A673 (cell line): ENCODE measurements at regions of chr1 and their contacts with region 1.

Region 1: DNA sequence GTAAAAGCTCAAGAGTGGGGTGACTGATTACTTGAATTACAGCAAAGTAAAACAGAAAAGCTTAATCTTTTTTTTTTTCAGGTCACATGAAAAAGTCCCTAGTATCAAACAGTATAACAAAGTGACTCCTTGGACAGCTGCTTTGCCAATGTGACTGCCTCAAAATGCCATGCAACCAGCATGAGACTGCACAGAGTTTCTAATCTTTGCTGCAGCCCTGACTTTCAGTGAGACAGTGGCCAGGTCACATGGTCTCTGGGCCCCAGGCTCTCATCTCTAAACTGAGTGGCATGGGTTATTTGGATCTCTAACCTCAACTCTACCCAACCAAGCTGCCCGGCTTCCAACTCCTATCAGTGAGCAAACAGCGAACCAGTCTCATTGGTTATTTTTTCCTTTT is 169.0 kb downstream of the VAV3 start:
- DNase-seq: no peak
- H3K4me3 ChIP-seq: no peak overlapping the region
- H3K27ac ChIP-seq: no peak overlapping the region
- H3K4me1 ChIP-seq: peaks cover 20% of the 10 kb centered on the region
- H3K27me3 ChIP-seq: peaks cover 5% of the 10 kb centered on the region
- CTCF ChIP-seq: no peak

Region 2: DNA sequence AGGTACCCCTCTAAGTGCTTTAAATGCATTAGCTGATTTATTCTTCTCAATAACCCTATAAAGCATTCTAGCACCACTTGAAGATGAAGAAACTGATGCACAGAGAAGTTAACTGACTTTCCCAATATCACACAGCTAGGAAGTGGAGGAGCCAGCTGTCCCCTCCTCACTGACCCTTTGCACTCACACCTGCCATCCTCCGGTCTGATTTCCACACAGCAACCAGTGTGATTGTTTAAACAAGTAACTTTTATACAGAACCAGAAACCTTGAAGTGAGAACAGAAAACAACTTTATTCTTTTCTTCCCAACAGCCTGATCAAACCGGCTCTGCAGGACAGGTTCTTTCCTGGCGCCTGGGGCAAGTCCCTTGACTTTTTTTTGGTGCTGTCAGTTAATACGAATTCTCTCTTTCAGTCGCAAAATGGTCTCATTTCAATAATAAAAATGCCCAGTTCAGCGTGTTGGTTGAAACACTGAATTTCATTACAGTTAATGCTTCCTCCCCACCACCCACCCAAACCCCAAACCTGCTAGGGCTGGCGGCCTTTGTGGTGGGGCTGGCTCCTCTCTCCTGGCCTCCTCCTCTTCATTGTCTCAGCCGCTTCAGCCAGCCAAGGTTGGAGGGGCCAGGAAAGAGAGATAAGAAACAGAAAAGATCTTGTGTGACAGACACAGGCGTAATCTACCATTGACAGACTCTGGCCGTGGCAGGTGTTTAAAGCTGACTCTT is 737.5 kb after region 1 on chr1:
- CTCF ChIA-PET with region 1: no interaction called
- POLR2A ChIA-PET with region 1: interaction called, 13 read pairs
- intact Hi-C with region 1: no loop called
- DNase-seq: no peak
- H3K4me3 ChIP-seq: no peak overlapping the region
- H3K27ac ChIP-seq: no peak overlapping the region
- H3K4me1 ChIP-seq: peaks cover 15% of the 10 kb centered on the region
- H3K27me3 ChIP-seq: no peaks in the 10 kb centered on the region
- CTCF ChIP-seq: no peak